ENCODE measurements at regions of chr9 and their contacts with region 1.

Region 1: GRCh38 chr9:101705135-101705661 is 33.2 kb downstream of the GRIN3A start:
- DNase-seq: peak; percentile 53
- H3K4me3 Mint-ChIP-seq: peak overlapping the region; percentile 71
- H3K27ac Mint-ChIP-seq: no peak overlapping the region
- H3K4me1 Mint-ChIP-seq: peaks cover 6% of the 10 kb centered on the region
- H3K27me3 Mint-ChIP-seq: peaks cover 6% of the 10 kb centered on the region

Region 2: GRCh38 chr9:101586651-101587050 is 118.5 kb before region 1 on chr9:
- CTCF ChIA-PET with region 1: no interaction called
- POLR2A ChIA-PET with region 1: no interaction called
- intact Hi-C with region 1: loop called (anchors 10 kb)
- DNase-seq: peak; percentile 31
- H3K4me3 Mint-ChIP-seq: no peak overlapping the region
- H3K27ac Mint-ChIP-seq: no peak overlapping the region
- H3K4me1 Mint-ChIP-seq: peaks cover 11% of the 10 kb centered on the region
- H3K27me3 Mint-ChIP-seq: no peaks in the 10 kb centered on the region

Region 3: GRCh38 chr9:101639785-101640665 is 65.2 kb before region 1 on chr9:
- CTCF ChIA-PET with region 1: no interaction called
- POLR2A ChIA-PET with region 1: no interaction called
- intact Hi-C with region 1: no loop called
- DNase-seq: no peak
- H3K4me3 Mint-ChIP-seq: no peak overlapping the region
- H3K27ac Mint-ChIP-seq: no peak overlapping the region
- H3K4me1 Mint-ChIP-seq: no peaks in the 10 kb centered on the region
- H3K27me3 Mint-ChIP-seq: no peaks in the 10 kb centered on the region

Region 4: DNA sequence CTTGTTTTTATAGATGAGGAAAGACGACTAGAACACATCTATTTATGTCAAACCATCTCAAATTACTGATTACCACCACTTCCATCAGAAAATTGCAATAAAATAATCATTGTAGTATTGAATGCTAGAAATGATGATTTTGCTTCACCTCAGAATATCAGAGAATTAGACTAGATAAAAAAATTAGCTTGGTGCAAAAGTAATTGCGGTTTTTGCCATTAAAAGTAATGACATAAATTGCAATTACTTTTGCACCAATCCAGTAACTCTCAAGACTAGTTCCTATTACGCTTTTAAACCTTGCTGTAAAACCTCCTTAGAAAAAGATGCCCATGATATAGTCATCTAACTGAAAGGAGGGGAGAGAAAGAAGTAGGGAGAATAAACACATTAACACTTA is 590.0 kb after region 1 on chr9:
- CTCF ChIA-PET with region 1: no interaction called
- POLR2A ChIA-PET with region 1: no interaction called
- intact Hi-C with region 1: no loop called
- DNase-seq: no peak
- H3K4me3 Mint-ChIP-seq: no peak overlapping the region
- H3K27ac Mint-ChIP-seq: no peak overlapping the region
- H3K4me1 Mint-ChIP-seq: no peaks in the 10 kb centered on the region
- H3K27me3 Mint-ChIP-seq: no peaks in the 10 kb centered on the region

Measured in activated CD4-positive, alpha-beta memory T cell treated with anti-CD3 and anti-CD28 coated beads for 36 hours (primary cell).